RWPE1 (cell line): ENCODE measurements at regions of chr9 and their contacts with region 1.

Region 1: GRCh38 chr9:33816327-33817252 is at the start of gene UBE2R2:
- DNase-seq: peak; percentile 98
- H3K27ac ChIP-seq: peak within 1 kb of the TSS; percentile 95
- CTCF ChIP-seq: no peak

Region 2: DNA sequence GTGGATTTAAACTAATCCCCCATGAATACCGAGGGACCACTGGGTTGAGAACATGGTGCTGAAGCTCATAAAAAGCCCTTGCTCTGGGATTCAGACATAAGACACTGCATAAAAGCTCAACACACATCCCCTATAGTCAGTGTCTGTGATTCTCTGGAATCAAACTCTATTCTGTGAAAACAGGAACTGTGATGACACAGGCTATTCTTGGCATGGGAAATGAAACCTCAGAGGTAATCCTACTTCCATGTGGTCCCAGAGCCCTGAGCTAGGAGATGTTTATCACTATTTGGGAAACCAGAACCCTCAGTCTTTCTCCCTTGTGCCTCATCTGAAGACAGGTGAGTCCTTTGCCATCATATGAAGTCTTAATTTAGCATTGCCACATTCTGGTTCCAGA is 156.7 kb before region 1 on chr9:
- CTCF ChIA-PET with region 1: no interaction called
- POLR2A ChIA-PET with region 1: no interaction called
- DNase-seq: no peak
- H3K27ac ChIP-seq: no peak overlapping the region
- CTCF ChIP-seq: no peak

Region 3: GRCh38 chr9:33852216-33852826 is 35.7 kb after region 1 on chr9:
- CTCF ChIA-PET with region 1: interaction called, 12 read pairs
- POLR2A ChIA-PET with region 1: interaction called, 11 read pairs
- DNase-seq: peak; percentile 45
- H3K27ac ChIP-seq: peak overlapping the region; percentile 36
- CTCF ChIP-seq: peak; percentile 86

Region 4: DNA sequence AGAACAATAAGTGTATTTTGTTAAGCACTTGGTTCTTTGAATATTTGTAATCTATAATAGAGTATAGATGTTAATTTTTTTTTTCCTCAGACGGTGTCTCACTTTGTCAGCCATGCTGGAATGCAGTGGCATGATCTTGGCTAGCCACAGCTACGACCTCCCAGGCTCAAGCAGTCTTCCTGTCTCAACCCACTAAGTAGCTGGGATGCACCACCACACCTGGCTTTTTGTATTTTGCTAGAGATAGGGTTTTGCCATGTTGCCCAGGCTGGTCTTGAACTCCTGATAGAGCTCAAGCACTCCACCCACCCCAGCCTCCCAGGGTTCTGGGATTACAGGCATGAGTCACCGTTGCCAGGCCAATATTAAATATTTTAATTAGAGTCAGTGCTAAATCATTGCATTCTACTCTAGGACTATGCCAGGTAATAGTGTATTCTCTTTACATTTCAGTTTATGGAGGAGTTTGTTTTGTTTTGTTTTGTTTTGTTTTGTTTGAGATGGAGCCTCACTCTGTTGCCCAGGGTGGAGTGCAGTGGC is 41.8 kb after region 1 on chr9:
- CTCF ChIA-PET with region 1: interaction called, 13 read pairs
- POLR2A ChIA-PET with region 1: no interaction called
- DNase-seq: no peak
- H3K27ac ChIP-seq: peak overlapping the region; percentile 40
- CTCF ChIP-seq: no peak